CD8-positive, alpha-beta memory T cell (primary cell): ENCODE measurements at regions of chrX and their contacts with region 1.

Region 1: GRCh38 chrX:39745818-39746217 is 351.9 kb downstream of the BCOR start:
- DNase-seq: no peak
- H3K4me3 ChIP-seq: no peak overlapping the region
- H3K4me3 Mint-ChIP-seq: no peak overlapping the region
- H3K27ac ChIP-seq: no peak overlapping the region
- H3K27ac Mint-ChIP-seq: no peak overlapping the region
- H3K4me1 ChIP-seq: no peaks in the 10 kb centered on the region
- H3K4me1 Mint-ChIP-seq: peaks cover 4 to 7% (median 7%) of the 10 kb centered on the region in 3 donors
- H3K27me3 ChIP-seq: no peaks in the 10 kb centered on the region
- H3K27me3 Mint-ChIP-seq: peaks cover 0 to 12% of the 10 kb centered on the region in 2 donors

Region 2: GRCh38 chrX:39716401-39716800 is 29.4 kb before region 1 on chrX:
- CTCF ChIA-PET with region 1: no interaction called
- POLR2A ChIA-PET with region 1: interaction called, 11 read pairs
- DNase-seq: no peak
- H3K4me3 ChIP-seq: no peak overlapping the region
- H3K4me3 Mint-ChIP-seq: no peak overlapping the region
- H3K27ac ChIP-seq: no peak overlapping the region
- H3K27ac Mint-ChIP-seq: no peak overlapping the region
- H3K4me1 ChIP-seq: no peaks in the 10 kb centered on the region
- H3K4me1 Mint-ChIP-seq: no peaks in the 10 kb centered on the region
- H3K27me3 ChIP-seq: no peaks in the 10 kb centered on the region
- H3K27me3 Mint-ChIP-seq: peaks cover 0 to 8% of the 10 kb centered on the region in 2 donors